Activated CD4-positive, alpha-beta T cell treated with anti-CD3 and anti-CD28 coated beads for 36 hours (primary cell): ENCODE measurements at regions of chr18 and their contacts with region 1.

Region 1: DNA sequence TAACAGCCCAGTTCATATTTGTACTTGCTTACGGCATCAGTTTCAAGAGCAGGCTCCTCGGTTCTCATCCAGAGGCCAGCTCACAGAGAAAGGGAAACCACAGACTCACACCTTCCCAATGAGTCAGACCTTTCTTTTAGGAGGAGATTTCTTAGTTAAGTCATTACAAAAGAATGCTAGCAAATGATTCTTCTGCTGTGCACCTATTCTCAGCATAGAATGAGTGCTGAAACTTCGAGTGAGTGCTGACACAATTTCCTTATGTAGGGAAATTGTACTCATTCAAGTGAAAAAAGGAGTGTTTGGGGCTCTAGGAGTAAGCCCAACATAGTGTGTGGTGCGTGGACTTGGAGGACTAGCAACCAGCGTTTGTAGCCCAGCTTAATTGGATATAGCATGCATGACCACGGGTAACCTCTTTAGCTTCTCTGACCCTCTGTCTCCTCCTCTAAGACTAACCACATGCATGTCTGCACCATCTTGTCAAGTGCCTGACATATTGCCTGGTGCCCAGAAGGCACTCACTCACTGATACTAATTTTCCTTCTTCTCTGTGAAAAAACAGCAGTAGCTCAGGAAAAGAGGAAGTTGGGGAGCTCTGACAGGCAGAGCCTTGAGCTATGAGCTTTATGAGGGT is 87.0 kb downstream of the ALPK2 start:
- DNase-seq: peak; percentile 79
- ATAC-seq: peak; percentile 79
- H3K4me3 Mint-ChIP-seq: no peak overlapping the region
- H3K27ac Mint-ChIP-seq: peak overlapping the region; percentile 79
- H3K4me1 Mint-ChIP-seq: peaks cover 90% of the 10 kb centered on the region
- H3K27me3 Mint-ChIP-seq: peaks cover 5% of the 10 kb centered on the region

Region 2: DNA sequence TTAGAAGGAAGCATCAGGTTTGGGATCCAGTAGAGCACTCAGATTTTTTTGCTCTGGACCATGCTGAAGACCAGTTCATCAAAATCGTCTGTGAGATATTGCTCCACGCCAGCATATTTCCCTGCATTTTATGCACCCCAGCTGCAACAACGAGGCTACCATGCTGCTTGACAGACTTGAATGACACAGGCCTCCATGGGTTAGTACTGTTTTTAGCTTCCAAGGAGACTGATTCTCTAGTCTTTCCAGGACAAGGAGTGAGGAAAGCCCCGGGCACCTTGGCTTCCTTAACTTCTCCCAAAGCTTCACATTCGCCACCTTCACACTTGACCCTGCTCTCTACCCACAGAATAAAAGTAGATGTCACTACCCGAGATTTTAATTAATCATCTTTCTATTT is 1377.5 kb before region 1 on chr18:
- CTCF ChIA-PET with region 1: no interaction called
- POLR2A ChIA-PET with region 1: no interaction called
- intact Hi-C with region 1: no loop called
- DNase-seq: no peak
- ATAC-seq: no peak
- H3K4me3 Mint-ChIP-seq: no peak overlapping the region
- H3K27ac Mint-ChIP-seq: no peak overlapping the region
- H3K4me1 Mint-ChIP-seq: no peaks in the 10 kb centered on the region
- H3K27me3 Mint-ChIP-seq: peaks cover 11% of the 10 kb centered on the region

Region 3: GRCh38 chr18:58128381-58129374 is 413.2 kb before region 1 on chr18:
- CTCF ChIA-PET with region 1: no interaction called
- POLR2A ChIA-PET with region 1: no interaction called
- intact Hi-C with region 1: no loop called
- DNase-seq: no peak
- ATAC-seq: no peak
- H3K4me3 Mint-ChIP-seq: no peak overlapping the region
- H3K27ac Mint-ChIP-seq: no peak overlapping the region
- H3K4me1 Mint-ChIP-seq: no peaks in the 10 kb centered on the region
- H3K27me3 Mint-ChIP-seq: no peaks in the 10 kb centered on the region

Region 4: GRCh38 chr18:58520969-58521368 is 20.9 kb before region 1 on chr18:
- CTCF ChIA-PET with region 1: interaction called, 4 read pairs
- POLR2A ChIA-PET with region 1: no interaction called
- intact Hi-C with region 1: loop called in 1 of 2 experiments (anchors 1 kb)
- DNase-seq: peak; percentile 57
- ATAC-seq: peak; percentile 70
- H3K4me3 Mint-ChIP-seq: no peak overlapping the region
- H3K27ac Mint-ChIP-seq: peak overlapping the region; percentile 28
- H3K4me1 Mint-ChIP-seq: peaks cover 22% of the 10 kb centered on the region
- H3K27me3 Mint-ChIP-seq: peaks cover 13% of the 10 kb centered on the region

Region 5: GRCh38 chr18:58605027-58606020 is 63.4 kb after region 1 on chr18:
- CTCF ChIA-PET with region 1: interaction called, 7 read pairs
- POLR2A ChIA-PET with region 1: interaction called, 3 read pairs
- intact Hi-C with region 1: loop called (anchors 1 to 2 kb)
- DNase-seq: peak; percentile 76
- ATAC-seq: peak; percentile 84
- H3K4me3 Mint-ChIP-seq: no peak overlapping the region
- H3K27ac Mint-ChIP-seq: peak overlapping the region; percentile 35
- H3K4me1 Mint-ChIP-seq: peaks cover 56% of the 10 kb centered on the region
- H3K27me3 Mint-ChIP-seq: peaks cover 4% of the 10 kb centered on the region

Region 6: DNA sequence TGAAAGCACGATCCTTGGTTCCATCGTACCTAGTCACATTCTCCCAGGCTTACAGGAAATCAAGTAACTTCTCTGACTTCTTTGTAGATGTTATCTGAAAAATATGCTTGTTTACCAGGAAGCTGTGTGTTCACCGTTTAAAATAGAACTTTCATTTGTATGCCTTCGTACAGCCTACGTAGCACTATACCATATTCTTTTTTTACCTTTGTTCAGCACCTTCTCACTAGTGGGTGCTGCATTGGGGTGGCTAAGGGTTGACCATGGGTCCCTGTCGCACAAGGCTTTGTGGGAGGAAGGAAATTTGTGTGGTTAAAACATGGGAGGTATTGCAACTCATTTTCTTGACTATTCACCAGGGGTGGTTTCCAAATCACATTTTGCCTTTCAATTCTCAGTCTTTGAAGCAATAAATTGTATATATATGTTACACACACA is 146.0 kb after region 1 on chr18:
- CTCF ChIA-PET with region 1: interaction called, 4 read pairs
- POLR2A ChIA-PET with region 1: interaction called, 7 read pairs
- intact Hi-C with region 1: loop called in 1 of 2 experiments (anchors 5 kb)
- DNase-seq: peak; percentile 69
- ATAC-seq: peak; percentile 79
- H3K4me3 Mint-ChIP-seq: peak overlapping the region; percentile 64
- H3K27ac Mint-ChIP-seq: peak overlapping the region; percentile 92
- H3K4me1 Mint-ChIP-seq: peaks cover 83% of the 10 kb centered on the region
- H3K27me3 Mint-ChIP-seq: no peaks in the 10 kb centered on the region

Region 7: DNA sequence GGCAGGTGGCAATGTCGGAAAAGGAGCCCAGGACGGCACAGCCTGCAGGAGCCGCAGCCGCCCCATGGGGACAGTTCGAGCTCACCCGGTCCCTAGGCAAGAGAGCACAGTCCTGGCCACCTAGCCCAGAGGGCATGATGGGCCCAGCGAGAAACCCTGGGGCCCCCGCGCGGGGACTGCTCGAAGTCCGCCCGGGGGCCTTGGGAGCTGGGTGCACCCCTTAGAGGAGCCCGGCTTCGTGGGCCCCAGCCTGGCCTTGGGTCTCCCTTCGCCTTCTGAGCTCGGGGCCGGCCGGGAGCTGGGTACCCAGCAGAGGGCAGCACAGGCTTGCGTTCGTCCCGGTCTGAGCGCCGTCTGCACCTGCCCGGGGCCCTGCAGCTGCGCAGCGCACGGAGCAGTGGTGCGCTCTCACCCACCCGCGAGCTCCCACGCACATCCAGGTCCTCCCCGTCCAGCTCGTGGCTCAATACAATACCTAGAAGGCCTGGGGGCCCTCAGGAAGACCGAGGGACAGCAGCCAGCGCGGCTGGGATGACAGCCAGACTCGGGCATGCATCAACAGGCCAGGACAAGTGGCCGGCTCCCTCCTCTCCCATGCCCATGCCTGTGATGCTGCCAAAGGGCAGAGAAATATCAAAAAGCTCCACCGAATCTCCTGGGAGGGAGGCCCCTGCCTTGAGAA is 226.5 kb after region 1 on chr18:
- CTCF ChIA-PET with region 1: interaction called, 298 read pairs
- POLR2A ChIA-PET with region 1: no interaction called
- intact Hi-C with region 1: loop called in 1 of 2 experiments (anchors 1 kb)
- DNase-seq: peak; percentile 88
- ATAC-seq: peak; percentile 97
- H3K4me3 Mint-ChIP-seq: peak overlapping the region; percentile 38
- H3K27ac Mint-ChIP-seq: no peak overlapping the region
- H3K4me1 Mint-ChIP-seq: peaks cover 3% of the 10 kb centered on the region
- H3K27me3 Mint-ChIP-seq: peaks cover 34% of the 10 kb centered on the region

Region 8: GRCh38 chr18:59358712-59359575 is 817.0 kb after region 1 on chr18 and contains the start of gene LMAN1:
- CTCF ChIA-PET with region 1: no interaction called
- POLR2A ChIA-PET with region 1: no interaction called
- intact Hi-C with region 1: loop called in 1 of 2 experiments (anchors 5 kb)
- DNase-seq: peak; percentile 97
- ATAC-seq: peak; percentile 93
- H3K4me3 Mint-ChIP-seq: peak within 1 kb of the TSS; percentile 98
- H3K27ac Mint-ChIP-seq: peak within 1 kb of the TSS; percentile 99
- H3K4me1 Mint-ChIP-seq: peaks cover 29% of the 10 kb centered on the region
- H3K27me3 Mint-ChIP-seq: no peaks in the 10 kb centered on the region
- total RNA-seq, gene LMAN1: 121 to 134 TPM